K562 (cell line): ENCODE measurements at regions of chr1 and their contacts with region 1.

Region 1: DNA sequence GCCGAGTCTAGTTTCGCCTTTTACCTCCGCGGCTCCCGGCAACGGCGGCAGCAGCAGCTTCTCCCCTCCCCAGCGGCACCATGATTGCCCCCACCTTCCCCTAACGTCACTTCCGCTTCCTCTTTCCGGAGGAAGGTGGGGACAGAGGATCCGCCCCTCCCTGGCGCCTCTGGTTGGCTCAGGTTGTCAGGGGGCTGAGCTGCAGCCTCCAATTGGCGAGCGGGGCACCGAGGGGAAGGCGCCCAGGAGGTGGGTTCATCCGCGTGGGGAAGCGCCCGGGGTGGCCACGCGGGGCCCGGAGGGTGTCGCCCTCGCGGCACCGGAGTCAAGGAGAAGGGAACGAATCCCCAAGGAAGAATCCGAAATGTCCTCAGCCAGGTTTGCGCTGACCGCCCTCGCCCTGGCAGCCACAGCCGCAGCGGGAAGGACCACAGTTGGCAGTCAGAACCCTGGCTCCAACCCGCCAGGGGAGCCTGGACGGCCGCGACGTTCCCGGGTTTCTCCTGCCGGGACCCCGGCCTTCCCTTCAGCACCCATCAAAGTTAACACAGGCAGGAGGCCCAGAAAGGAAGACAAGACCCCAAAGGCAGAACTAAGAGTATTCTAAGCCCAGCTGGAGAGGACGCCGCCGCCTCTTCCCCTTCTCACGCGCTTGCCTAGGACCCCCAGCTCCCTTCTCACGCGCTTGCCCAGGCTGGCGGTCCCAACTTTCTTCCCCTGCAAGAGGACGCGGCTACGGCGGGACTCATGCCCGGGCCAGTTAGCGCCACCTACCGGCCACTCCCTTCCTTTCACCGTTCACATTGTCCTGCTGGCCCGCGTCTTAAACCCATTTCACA is at the start of gene MTF1:
- DNase-seq: peak; percentile 99 to 100 (median 99)
- ATAC-seq: peak; percentile 99
- H3K4me3 ChIP-seq: peak within 1 kb of the TSS; percentile 97
- H3K27ac ChIP-seq: peak within 1 kb of the TSS; percentile 81
- H3K4me1 ChIP-seq: peaks cover 21 to 22% of the 10 kb centered on the region in 2 experiments; a peak in 4 of 5 replicates
- H3K27me3 ChIP-seq: no peaks in the 10 kb centered on the region; a peak in 1 of 5 replicates
- CTCF ChIP-seq: peak; percentile 86 to 97 (median 90)
- EP300 ChIP-seq: 0 out of 2 replicates have a peak, but pooled peaks have one; percentile 4
- POLR2A ChIP-seq: peak; percentile 97
- RAD21 ChIP-seq: peak; percentile 66 to 85
- polyA plus RNA-seq, gene MTF1: 1.9 to 2.4 TPM

Region 2: GRCh38 chr1:37807555-37808368 is 52.0 kb before region 1 on chr1 and contains the starts of genes C1orf122 and YRDC:
- CTCF ChIA-PET with region 1: interaction called, 3 read pairs
- POLR2A ChIA-PET with region 1: interaction called, 8 read pairs
- in situ Hi-C with region 1: no loop called
- intact Hi-C with region 1: loop called (anchors 2 kb)
- DNase-seq: peak; percentile 96 to 98 (median 96)
- ATAC-seq: peak; percentile 94
- H3K4me3 ChIP-seq: peak within 1 kb of the TSS; percentile 93
- H3K27ac ChIP-seq: peak within 1 kb of the TSS; percentile 78
- H3K4me1 ChIP-seq: peaks cover 18 to 25% of the 10 kb centered on the region in 2 experiments; a peak in 4 of 5 replicates
- H3K27me3 ChIP-seq: no peaks in the 10 kb centered on the region
- CTCF ChIP-seq: no peak
- EP300 ChIP-seq: no peak
- POLR2A ChIP-seq: peak; percentile 82
- RAD21 ChIP-seq: no peak
- polyA plus RNA-seq, gene C1orf122: 3.6 to 5.2 TPM
- polyA plus RNA-seq, gene YRDC: 11.1 to 16.7 TPM

Region 3: DNA sequence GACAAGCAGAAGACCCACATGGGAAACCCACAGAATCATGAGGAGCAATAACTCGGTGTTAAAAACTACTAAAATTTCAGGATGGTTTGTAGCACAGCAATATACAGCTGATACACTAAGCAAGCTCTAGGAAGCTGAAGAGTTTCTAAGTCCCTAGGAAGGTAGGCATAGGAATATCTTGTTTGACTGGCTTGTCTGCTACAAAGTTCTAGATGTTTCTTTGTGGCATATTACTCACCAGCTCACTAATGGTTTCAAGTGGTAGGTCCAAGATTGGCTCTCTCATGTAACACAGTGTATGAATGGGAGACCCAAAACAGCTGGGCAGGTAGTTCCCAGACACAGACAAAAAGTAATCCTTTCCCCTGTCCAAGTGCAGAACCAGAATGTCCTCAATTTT is 13.0 kb after region 1 on chr1:
- CTCF ChIA-PET with region 1: no interaction called
- POLR2A ChIA-PET with region 1: interaction called, 14 read pairs
- in situ Hi-C with region 1: no loop called
- intact Hi-C with region 1: no loop called
- DNase-seq: no peak
- ATAC-seq: no peak
- H3K4me3 ChIP-seq: no peak overlapping the region
- H3K27ac ChIP-seq: no peak overlapping the region
- H3K4me1 ChIP-seq: no peaks in the 10 kb centered on the region; a peak in 1 of 5 replicates
- H3K27me3 ChIP-seq: no peaks in the 10 kb centered on the region
- CTCF ChIP-seq: no peak
- EP300 ChIP-seq: no peak
- POLR2A ChIP-seq: no peak
- RAD21 ChIP-seq: no peak